HEK293 (cell line): ENCODE measurements at regions of chr6 and their contacts with region 1.

Region 1: GRCh38 chr6:168025831-168026710 is 28.6 kb downstream of the KIF25 start:
- H3K4me3 ChIP-seq: no peak overlapping the region
- H3K27ac ChIP-seq: no peak overlapping the region
- H3K4me1 ChIP-seq: peaks cover 26% of the 10 kb centered on the region
- CTCF ChIP-seq: no peak

Region 2: GRCh38 chr6:168804331-168804730 is 778.3 kb after region 1 on chr6:
- CTCF ChIA-PET with region 1: no interaction called
- POLR2A ChIA-PET with region 1: interaction called, 10 read pairs
- H3K4me3 ChIP-seq: no peak overlapping the region
- H3K27ac ChIP-seq: no peak overlapping the region
- H3K4me1 ChIP-seq: no peaks in the 10 kb centered on the region
- CTCF ChIP-seq: no peak